Heart right ventricle (tissue), 16 donors: ENCODE measurements at regions of chr10 and their contacts with region 1.

Region 1: DNA sequence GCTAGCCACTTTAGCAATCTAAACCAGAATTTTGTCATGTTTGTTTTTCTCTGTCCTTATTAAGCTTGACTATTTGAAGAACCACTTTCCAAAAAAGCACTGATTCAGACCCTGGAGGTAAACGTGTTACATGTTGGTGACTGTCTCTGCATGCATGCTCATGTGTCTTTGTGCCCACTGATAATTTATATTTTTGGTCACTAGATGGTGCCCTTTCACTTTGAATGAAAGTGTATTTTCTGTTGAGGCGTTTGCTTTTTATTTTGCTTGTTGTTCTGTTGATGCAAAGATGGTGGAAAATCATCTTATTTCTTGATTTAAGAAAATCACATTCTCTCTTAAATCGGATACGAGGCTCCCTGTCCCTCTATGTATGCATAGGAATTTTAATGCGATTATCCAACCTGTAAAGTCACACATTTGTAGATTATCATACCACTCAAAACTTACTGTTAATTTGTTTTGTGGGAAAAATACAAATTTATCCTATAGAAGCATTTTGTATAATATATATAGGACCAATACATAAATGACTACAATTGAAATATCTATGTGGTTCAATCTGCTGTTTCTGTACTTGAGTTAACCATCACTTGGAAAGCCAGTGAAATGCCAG is 269.3 kb downstream of the BICC1 start:
- DNase-seq: no peak
- ATAC-seq: peak in 6 of 8 donors; percentile 36 to 63 (median 46)
- H3K4me3 ChIP-seq: no peak overlapping the region
- H3K27ac ChIP-seq: peak overlapping the region in 6 of 10 donors; percentile 29 to 64 (median 42)
- H3K4me1 ChIP-seq: peaks cover 4 to 37% (median 18%) of the 10 kb centered on the region in 9 donors
- H3K27me3 ChIP-seq: peaks cover 0 to 9% (median 0%) of the 10 kb centered on the region in 7 donors
- CTCF ChIP-seq: peak in 8 of 9 donors; percentile 36 to 72 (median 62)

Region 2: GRCh38 chr10:57948796-57949195 is 833.2 kb before region 1 on chr10:
- intact Hi-C with region 1: no loop called
- DNase-seq: no peak
- ATAC-seq: no peak
- H3K4me3 ChIP-seq: no peak overlapping the region
- H3K27ac ChIP-seq: no peak overlapping the region
- H3K4me1 ChIP-seq: peaks cover 0 to 3% (median 0%) of the 10 kb centered on the region in 9 donors
- H3K27me3 ChIP-seq: no peaks in the 10 kb centered on the region
- CTCF ChIP-seq: no peak

Region 3: DNA sequence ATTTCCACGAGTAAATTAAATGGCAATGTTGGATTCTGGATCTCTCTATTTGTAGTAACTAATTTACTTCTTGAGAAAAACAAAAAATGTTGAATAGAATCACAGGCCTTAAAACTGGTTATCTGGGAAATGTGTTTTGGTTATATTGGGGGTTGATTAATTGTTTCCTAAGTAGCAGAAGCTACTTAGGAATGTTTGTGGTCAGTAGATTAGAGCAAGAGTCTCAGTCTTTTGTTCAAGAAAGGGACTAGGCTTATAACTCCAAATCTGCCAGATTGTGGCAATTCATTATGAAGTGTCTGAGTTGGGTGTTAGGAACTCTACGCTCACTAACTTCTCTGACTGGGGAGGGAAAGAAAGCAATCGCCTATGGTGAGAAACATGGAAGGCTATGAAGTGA is 150.1 kb after region 1 on chr10:
- intact Hi-C with region 1: loop called in 1 of 10 experiments (anchors 10 kb)
- DNase-seq: no peak
- ATAC-seq: no peak
- H3K4me3 ChIP-seq: no peak overlapping the region
- H3K27ac ChIP-seq: no peak overlapping the region
- H3K4me1 ChIP-seq: no peaks in the 10 kb centered on the region
- H3K27me3 ChIP-seq: no peaks in the 10 kb centered on the region
- CTCF ChIP-seq: no peak

Region 4: GRCh38 chr10:58943256-58943890 is 161.4 kb after region 1 on chr10:
- intact Hi-C with region 1: loop called in 2 of 10 experiments (anchors 10 kb)
- DNase-seq: no peak
- ATAC-seq: no peak
- H3K4me3 ChIP-seq: no peak overlapping the region
- H3K27ac ChIP-seq: no peak overlapping the region
- H3K4me1 ChIP-seq: peaks cover 0 to 21% (median 0%) of the 10 kb centered on the region in 9 donors
- H3K27me3 ChIP-seq: no peaks in the 10 kb centered on the region
- CTCF ChIP-seq: no peak

Region 5: DNA sequence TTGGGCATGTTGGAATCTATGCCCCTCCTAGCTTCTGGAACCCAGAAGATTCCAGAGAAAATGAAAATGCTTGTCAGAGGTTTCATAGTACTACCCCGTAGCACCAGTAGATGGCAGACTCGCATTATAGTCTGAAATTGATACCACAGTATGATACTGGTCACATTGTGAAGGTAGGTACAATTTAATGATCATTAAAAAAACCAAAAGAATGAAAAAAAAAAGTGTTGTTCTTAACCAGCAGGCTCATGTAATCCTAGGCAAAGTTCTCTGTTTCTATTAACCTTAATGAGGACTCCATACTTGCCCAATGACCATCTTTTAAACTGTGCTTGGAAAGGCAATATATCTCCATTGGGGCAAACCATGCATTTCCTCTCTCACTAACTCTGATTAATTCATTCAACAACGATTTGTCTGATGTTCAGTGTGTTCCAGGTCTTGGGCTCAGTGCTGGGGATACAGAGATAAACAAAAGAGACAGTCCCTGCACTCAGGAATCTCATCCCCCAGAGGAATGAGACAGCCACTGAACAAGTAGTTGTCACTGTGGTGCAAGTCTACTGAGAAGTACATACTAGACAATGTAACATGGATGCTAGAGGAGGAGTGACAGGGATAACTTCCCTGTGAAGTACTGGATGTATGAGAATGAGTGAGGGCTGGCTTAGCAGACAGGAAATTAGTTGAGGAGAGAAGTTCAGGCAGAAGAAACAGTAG is 170.9 kb after region 1 on chr10:
- intact Hi-C with region 1: loop called in 5 of 10 experiments (anchors 5 to 10 kb)
- DNase-seq: peak in 1 of 2 donors; percentile 46
- ATAC-seq: peak; percentile 67 to 80 (median 72)
- H3K4me3 ChIP-seq: no peak overlapping the region
- H3K27ac ChIP-seq: peak overlapping the region in 8 of 10 donors; percentile 1 to 63 (median 46)
- H3K4me1 ChIP-seq: peaks cover 0 to 5% (median 0%) of the 10 kb centered on the region in 9 donors
- H3K27me3 ChIP-seq: no peaks in the 10 kb centered on the region
- CTCF ChIP-seq: peak; percentile 67 to 90 (median 78)

Region 6: GRCh38 chr10:59181668-59182067 is 399.7 kb after region 1 on chr10:
- intact Hi-C with region 1: loop called in 4 of 10 experiments (anchors 5 to 10 kb)
- DNase-seq: peak in 1 of 2 donors; percentile 22
- ATAC-seq: peak in 5 of 8 donors; percentile 67 to 78 (median 67)
- H3K4me3 ChIP-seq: no peak overlapping the region
- H3K27ac ChIP-seq: no peak overlapping the region
- H3K4me1 ChIP-seq: peaks cover 0 to 10% (median 5%) of the 10 kb centered on the region in 9 donors
- H3K27me3 ChIP-seq: peaks cover 0 to 29% (median 27%) of the 10 kb centered on the region in 7 donors
- CTCF ChIP-seq: peak; percentile 33 to 74 (median 62)

Region 7: DNA sequence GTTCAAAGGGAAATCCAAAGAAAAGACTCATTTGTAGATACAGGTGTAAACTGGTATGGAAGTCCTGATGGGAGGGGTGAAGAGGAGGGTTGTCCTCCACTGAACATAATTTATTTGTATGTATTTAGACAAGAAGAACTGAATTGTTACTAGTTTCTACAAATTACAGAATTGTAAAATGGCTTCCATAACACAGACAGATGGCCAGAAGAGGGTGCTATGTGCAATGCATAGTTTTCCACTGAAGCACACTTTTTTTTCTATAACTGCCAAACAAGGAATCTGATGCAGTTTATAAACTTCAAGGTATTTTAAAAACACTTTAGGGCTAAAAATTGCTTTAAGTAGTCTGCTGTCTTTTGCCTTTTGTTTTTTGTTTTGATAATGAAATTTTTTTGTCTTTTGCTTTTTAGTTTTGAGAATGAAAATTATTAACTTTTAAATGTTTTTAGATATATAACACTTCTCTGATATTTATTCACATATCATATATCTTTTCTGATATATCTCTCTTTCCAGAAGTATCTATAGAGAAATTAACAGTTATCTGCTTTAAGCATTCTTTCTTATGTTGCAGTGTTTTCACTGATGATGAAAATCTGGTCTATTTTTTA is 452.9 kb after region 1 on chr10:
- intact Hi-C with region 1: loop called in 3 of 10 experiments (anchors 2 to 10 kb)
- DNase-seq: peak in 1 of 2 donors; percentile 30
- ATAC-seq: no peak
- H3K4me3 ChIP-seq: no peak overlapping the region
- H3K27ac ChIP-seq: no peak overlapping the region
- H3K4me1 ChIP-seq: no peaks in the 10 kb centered on the region
- H3K27me3 ChIP-seq: no peaks in the 10 kb centered on the region
- CTCF ChIP-seq: peak; percentile 30 to 78 (median 62)

Region 8: DNA sequence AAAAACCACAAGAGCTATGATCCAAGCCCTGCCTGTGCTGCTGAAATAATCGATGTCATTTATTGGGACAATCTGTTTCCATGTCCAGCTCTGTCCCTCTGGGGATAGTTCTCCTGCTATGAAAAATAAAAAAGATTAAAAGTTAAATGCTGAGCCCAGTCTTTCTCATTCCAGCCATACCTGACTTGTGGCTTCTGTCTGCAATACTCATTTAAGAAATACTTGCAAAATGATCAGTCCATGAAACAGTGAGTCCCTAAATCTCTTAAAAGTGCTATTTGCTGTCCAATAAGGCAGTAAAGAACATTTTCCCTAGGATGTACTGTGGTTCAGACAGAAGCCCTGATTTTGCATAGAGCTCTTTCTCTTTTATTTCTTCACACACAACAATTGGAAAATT is 836.0 kb after region 1 on chr10:
- intact Hi-C with region 1: loop called in 7 of 10 experiments (anchors 5 to 10 kb)
- DNase-seq: no peak
- ATAC-seq: no peak
- H3K4me3 ChIP-seq: no peak overlapping the region
- H3K27ac ChIP-seq: peak overlapping the region in 1 of 10 donors; percentile 44
- H3K4me1 ChIP-seq: peaks cover 0 to 11% (median 0%) of the 10 kb centered on the region in 9 donors
- H3K27me3 ChIP-seq: no peaks in the 10 kb centered on the region
- CTCF ChIP-seq: no peak